ENCODE measurements at regions of chr1 and their contacts with region 1.

Region 1: GRCh38 chr1:235328357-235329138 is at the start of gene GGPS1:
- DNase-seq: peak; percentile 99
- ATAC-seq: peak; percentile 94
- total RNA-seq, gene GGPS1: 33.1 TPM

Region 2: GRCh38 chr1:235253219-235253962 is 75.2 kb before region 1 on chr1:
- intact Hi-C with region 1: loop called (anchors 1 kb)
- DNase-seq: no peak
- ATAC-seq: peak; percentile 90

Region 3: DNA sequence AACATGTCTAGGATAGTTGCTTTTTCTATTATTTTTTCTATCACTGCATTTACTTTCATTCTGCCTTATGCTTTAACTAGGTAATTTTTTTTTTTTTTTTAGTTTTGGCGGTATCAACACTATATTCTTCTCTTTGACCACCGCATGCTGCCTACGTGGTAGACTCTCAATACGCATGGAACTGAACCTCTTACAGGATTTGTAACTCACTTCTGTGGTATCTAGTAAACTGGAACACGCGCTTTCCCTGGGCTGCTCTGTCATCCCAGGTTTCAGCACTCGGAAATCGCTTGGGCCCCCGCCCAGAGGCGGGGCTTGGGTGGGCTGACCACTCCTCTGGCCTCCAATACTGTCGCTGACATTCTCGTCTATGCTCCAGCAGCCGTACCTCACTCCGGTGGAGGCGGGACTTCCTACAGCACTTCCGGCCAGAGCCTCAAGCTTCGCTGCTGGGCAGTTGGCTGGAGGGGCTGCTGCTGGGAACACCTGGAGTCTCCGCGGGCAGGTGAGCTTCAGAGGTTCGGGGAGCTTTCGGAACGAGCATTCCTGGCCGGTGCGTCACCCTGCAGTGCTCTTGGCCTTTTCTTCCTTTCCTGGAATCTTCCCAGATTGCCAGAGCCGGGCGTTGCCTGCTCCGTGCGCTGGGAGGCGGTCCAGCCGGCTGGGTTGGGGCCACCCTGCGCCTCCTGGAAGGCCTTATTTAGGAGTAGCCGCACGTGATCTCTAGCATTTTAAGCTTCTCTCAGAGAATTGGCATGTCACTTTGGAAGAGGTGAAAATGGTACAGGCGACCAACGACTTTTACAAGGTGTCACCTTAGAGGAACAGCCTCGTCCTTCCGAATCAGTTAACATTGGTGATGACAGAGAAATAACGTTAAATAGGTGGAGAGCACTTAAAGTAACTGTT is 38.7 kb after region 1 on chr1 and contains the start of gene TBCE:
- intact Hi-C with region 1: loop called (anchors 1 kb)
- DNase-seq: peak; percentile 98
- ATAC-seq: peak; percentile 100
- total RNA-seq, gene TBCE: 22.8 TPM